Panc1 (cell line): ENCODE measurements at regions of chr9 and their contacts with region 1.

Region 1: GRCh38 chr9:72491242-72491641 is 30.2 kb upstream of the TMC1 start:
- DNase-seq: no peak
- ATAC-seq: no peak
- H3K4me3 ChIP-seq: no peak overlapping the region
- H3K27ac ChIP-seq: peak overlapping the region; percentile 84; the same call in 1 of the 2 replicates
- H3K4me1 ChIP-seq: peaks cover 11% of the 10 kb centered on the region
- H3K27me3 ChIP-seq: no peaks in the 10 kb centered on the region
- CTCF ChIP-seq: no peak

Region 2: GRCh38 chr9:72271613-72272478 is 219.4 kb before region 1 on chr9:
- CTCF ChIA-PET with region 1: no interaction called
- POLR2A ChIA-PET with region 1: no interaction called
- in situ Hi-C with region 1: no loop called
- intact Hi-C with region 1: no loop called
- DNase-seq: peak; percentile 22
- ATAC-seq: peak; percentile 81; the same call in 1 of the 2 replicates
- H3K4me3 ChIP-seq: no peak overlapping the region
- H3K27ac ChIP-seq: no peak overlapping the region
- H3K4me1 ChIP-seq: no peaks in the 10 kb centered on the region
- H3K27me3 ChIP-seq: no peaks in the 10 kb centered on the region
- CTCF ChIP-seq: peak; percentile 76

Region 3: DNA sequence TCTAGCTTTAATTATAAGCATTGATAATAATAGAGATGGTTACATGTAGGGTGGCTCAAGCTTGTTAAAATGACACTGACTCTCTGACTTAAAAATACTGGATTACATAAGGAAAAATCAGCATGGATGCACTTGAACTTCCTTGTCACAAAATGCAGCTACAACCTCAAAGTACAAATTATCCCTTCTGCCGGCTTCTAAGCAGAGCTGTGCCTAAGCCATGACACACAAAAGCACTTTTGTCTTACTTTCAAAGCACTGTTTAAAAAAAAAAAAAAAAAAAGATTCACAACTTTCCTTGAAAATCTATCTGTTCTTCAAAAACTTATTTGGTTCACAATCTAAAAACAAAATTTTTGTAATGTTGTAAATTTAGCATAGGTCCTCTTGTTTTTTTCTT is 89.8 kb before region 1 on chr9:
- CTCF ChIA-PET with region 1: no interaction called
- POLR2A ChIA-PET with region 1: interaction called, 13 read pairs
- in situ Hi-C with region 1: no loop called
- intact Hi-C with region 1: no loop called
- DNase-seq: no peak
- ATAC-seq: no peak
- H3K4me3 ChIP-seq: no peak overlapping the region
- H3K27ac ChIP-seq: no peak overlapping the region
- H3K4me1 ChIP-seq: peaks cover 9% of the 10 kb centered on the region
- H3K27me3 ChIP-seq: no peaks in the 10 kb centered on the region
- CTCF ChIP-seq: no peak